ENCODE measurements at regions of chr6 and their contacts with region 1.

Region 1: GRCh38 chr6:144321839-144322591 is 36.9 kb downstream of the UTRN start:
- DNase-seq: no peak
- ATAC-seq: peak; percentile 76
- H3K4me3 ChIP-seq: no peak overlapping the region
- H3K27ac ChIP-seq: peak overlapping the region; percentile 18; the same call in 1 of the 2 replicates
- H3K4me1 ChIP-seq: peaks cover 18% of the 10 kb centered on the region
- H3K27me3 ChIP-seq: no peaks in the 10 kb centered on the region
- CTCF ChIP-seq: no peak

Region 2: DNA sequence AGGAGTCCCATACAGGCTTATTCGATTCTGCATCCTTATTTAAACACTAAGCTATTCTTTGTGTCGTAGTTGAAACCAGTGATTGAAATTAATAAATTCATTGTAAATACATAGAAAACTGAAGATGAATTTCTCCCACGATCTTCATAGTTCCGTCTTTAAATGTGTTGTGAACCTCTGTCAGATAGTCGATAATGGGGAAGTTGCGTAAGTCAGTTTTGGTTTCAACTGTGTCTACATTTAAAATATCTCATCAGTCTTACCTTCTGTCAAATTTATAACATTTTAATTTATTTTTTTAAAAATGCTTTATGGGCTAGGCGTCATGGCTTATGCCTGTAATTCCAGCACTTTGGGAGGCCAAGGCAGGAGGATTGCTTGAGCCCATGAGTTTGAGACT is 159.0 kb before region 1 on chr6:
- CTCF ChIA-PET with region 1: no interaction called
- POLR2A ChIA-PET with region 1: no interaction called
- in situ Hi-C with region 1: no loop called
- intact Hi-C with region 1: no loop called
- DNase-seq: no peak
- ATAC-seq: no peak
- H3K4me3 ChIP-seq: no peak overlapping the region
- H3K27ac ChIP-seq: no peak overlapping the region
- H3K4me1 ChIP-seq: no peaks in the 10 kb centered on the region; the same call in 1 of the 2 replicates
- H3K27me3 ChIP-seq: no peaks in the 10 kb centered on the region
- CTCF ChIP-seq: no peak

Region 3: GRCh38 chr6:144310765-144311164 is 11.2 kb before region 1 on chr6:
- CTCF ChIA-PET with region 1: no interaction called
- POLR2A ChIA-PET with region 1: interaction called, 11 read pairs
- in situ Hi-C with region 1: no loop called
- intact Hi-C with region 1: no loop called
- DNase-seq: no peak
- ATAC-seq: no peak
- H3K4me3 ChIP-seq: no peak overlapping the region
- H3K27ac ChIP-seq: no peak overlapping the region
- H3K4me1 ChIP-seq: peaks cover 16% of the 10 kb centered on the region
- H3K27me3 ChIP-seq: no peaks in the 10 kb centered on the region
- CTCF ChIP-seq: no peak

Region 4: GRCh38 chr6:144343701-144344428 is 21.9 kb after region 1 on chr6:
- CTCF ChIA-PET with region 1: no interaction called
- POLR2A ChIA-PET with region 1: interaction called, 23 read pairs
- in situ Hi-C with region 1: no loop called
- intact Hi-C with region 1: no loop called
- DNase-seq: no peak
- ATAC-seq: 0 out of 2 replicates have a peak, but pooled peaks have one; percentile 17
- H3K4me3 ChIP-seq: peak overlapping the region in 1 of 2 experiments; percentile 14; a peak in 2 of 4 replicates
- H3K27ac ChIP-seq: peak overlapping the region; percentile 60
- H3K4me1 ChIP-seq: peaks cover 47% of the 10 kb centered on the region
- H3K27me3 ChIP-seq: no peaks in the 10 kb centered on the region
- CTCF ChIP-seq: no peak

Region 5: DNA sequence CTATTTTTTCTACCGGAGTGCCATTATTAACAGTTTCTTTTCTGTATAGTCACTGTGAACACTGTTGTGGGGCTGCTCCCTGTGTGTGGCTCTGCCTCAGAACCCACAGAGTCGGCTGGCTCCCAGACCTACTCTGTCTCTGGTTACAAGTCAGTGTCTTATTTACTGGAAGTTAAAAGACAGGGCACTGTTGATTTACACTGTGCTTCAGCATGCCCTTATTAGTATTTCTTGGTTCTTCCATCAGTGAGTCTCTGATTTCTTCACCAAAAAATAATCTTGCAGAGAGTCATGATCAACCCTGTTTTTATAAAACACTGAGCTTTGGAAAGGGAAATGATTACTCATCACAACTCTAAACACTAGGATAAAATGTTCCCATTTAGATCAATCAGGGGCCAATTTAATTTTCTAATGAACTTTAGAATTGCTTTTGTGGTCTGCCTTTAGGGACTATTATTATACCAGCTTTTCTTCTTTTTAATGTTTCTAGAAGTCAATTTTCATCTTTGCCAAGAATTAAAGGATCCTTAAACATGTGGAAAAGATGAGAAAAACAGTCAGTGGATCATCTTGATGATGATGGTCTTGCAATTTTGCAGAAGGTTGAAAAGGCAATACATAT is 55.7 kb after region 1 on chr6:
- CTCF ChIA-PET with region 1: no interaction called
- POLR2A ChIA-PET with region 1: no interaction called
- in situ Hi-C with region 1: no loop called
- intact Hi-C with region 1: no loop called
- DNase-seq: no peak
- ATAC-seq: peak; percentile 45; the same call in 1 of the 2 replicates
- H3K4me3 ChIP-seq: no peak overlapping the region
- H3K27ac ChIP-seq: no peak overlapping the region; the same call in 1 of the 2 replicates
- H3K4me1 ChIP-seq: no peaks in the 10 kb centered on the region; the same call in 1 of the 2 replicates
- H3K27me3 ChIP-seq: no peaks in the 10 kb centered on the region
- CTCF ChIP-seq: no peak